Motor neuron (in vitro differentiated cells): ENCODE measurements at regions of chr7 and their contacts with region 1.

Region 1: GRCh38 chr7:128031901-128032604 is 816 bp upstream of the LRRC4 start:
- ATAC-seq: peak; percentile 73 to 85 (median 78)
- H3K4me3 ChIP-seq: peak overlapping the region; percentile 54 to 75 (median 61)
- H3K27ac ChIP-seq: peak overlapping the region; percentile 89 to 90
- H3K4me1 ChIP-seq: peaks cover 39 to 40% of the 10 kb centered on the region in 2 donors

Region 2: GRCh38 chr7:127708788-127709187 is 323.3 kb before region 1 on chr7:
- in situ Hi-C with region 1: loop called in 1 of 9 experiments (anchors 25 kb)
- ATAC-seq: peak in 7 of 8 experiments; percentile 28 to 93 (median 78)
- H3K4me3 ChIP-seq: no peak overlapping the region
- H3K27ac ChIP-seq: no peak overlapping the region
- H3K4me1 ChIP-seq: no peaks in the 10 kb centered on the region